PC-9 (cell line): ENCODE measurements at regions of chr7 and their contacts with region 1.

Region 1: GRCh38 chr7:16318989-16319915 is 102.1 kb downstream of the CRPPA start:
- DNase-seq: peak; percentile 22 to 98
- H3K4me3 ChIP-seq: 0 out of 2 replicates have a peak overlapping the region, but pooled peaks have one; percentile 1
- H3K27ac ChIP-seq: peak overlapping the region; percentile 61
- H3K4me1 ChIP-seq: peaks cover 36% of the 10 kb centered on the region
- H3K27me3 ChIP-seq: no peaks in the 10 kb centered on the region
- CTCF ChIP-seq: no peak

Region 2: DNA sequence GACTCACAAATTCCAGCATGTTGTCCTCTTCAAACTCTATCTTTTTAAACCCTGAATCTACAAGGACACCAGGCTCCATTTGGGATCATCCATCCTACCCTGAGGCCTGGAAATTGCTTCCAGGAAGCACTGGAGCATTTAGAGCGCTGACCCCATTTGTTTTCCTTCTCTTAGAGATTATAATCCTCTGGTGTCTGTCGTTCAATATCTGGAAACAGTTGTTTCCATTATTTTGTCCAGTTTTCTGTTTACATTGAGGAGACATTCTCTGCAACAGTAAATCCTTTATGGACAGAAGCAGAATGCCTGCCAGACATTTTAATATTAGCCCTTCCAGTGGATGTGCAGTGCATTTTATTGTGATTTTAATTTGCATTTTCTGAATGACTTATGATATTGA is 513.4 kb before region 1 on chr7:
- CTCF ChIA-PET with region 1: no interaction called
- POLR2A ChIA-PET with region 1: no interaction called
- intact Hi-C with region 1: no loop called
- DNase-seq: no peak
- H3K4me3 ChIP-seq: no peak overlapping the region
- H3K27ac ChIP-seq: no peak overlapping the region
- H3K4me1 ChIP-seq: no peaks in the 10 kb centered on the region
- H3K27me3 ChIP-seq: no peaks in the 10 kb centered on the region
- CTCF ChIP-seq: no peak

Region 3: DNA sequence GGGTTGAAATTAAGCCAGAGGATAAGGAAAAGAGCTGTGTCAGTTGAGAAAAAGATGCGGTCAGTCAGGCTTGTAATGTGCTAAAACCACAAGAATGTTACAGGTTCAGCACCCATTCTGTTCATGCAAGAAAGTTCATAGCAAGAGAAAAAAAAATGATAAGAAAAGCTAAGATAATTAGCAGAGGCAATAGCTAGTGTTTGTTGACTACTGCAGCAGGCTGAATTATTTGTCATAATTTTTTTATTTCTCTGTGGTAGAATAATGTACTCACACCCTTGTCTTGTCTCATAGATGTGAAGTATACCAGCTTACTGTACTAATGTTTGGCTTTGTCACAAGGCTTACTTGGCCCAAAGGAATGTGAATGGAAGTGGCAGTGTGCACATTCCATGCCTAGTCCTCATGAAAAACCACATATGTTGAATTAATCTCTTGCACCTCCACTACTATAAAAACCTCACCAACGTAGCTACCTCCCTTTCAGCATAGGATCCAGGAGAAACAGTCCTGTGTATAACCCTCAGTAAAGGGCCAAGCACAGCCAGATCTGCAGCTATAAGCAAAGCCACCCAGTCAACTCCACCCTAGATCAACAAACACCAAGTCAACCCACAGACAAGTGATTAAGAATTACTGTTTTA is 27.2 kb after region 1 on chr7:
- CTCF ChIA-PET with region 1: interaction called, 6 read pairs
- POLR2A ChIA-PET with region 1: interaction called, 3 read pairs
- intact Hi-C with region 1: loop called (anchors 1 kb)
- DNase-seq: peak; percentile 60 to 98
- H3K4me3 ChIP-seq: no peak overlapping the region; the same call in 1 of the 2 replicates
- H3K27ac ChIP-seq: peak overlapping the region; percentile 80
- H3K4me1 ChIP-seq: peaks cover 37% of the 10 kb centered on the region
- H3K27me3 ChIP-seq: no peaks in the 10 kb centered on the region
- CTCF ChIP-seq: no peak